Dorsolateral prefrontal cortex (tissue), 120 donors: ENCODE measurements at regions of chr11 and their contacts with region 1.

Region 1: DNA sequence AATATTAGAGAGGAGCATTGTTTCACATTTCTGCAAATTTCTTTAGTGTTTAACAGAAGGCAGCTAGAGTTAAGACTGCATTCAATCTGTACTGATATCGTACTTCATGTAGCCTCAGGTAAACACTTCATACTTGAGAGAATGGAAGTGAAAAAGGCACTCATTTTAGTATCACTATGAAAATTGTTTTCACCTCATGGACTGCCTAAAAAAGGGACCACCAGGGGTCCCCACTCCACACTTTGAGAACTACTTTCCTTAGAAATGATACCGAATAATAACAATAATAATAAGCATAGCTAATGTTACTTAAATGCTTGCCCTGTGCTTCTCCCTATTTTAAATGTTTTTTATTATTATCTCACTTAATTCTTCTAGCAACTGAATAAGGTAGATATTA is 95.1 kb downstream of the BLID start:
- DNase-seq: no peak
- H3K4me3 ChIP-seq: no peak overlapping the region
- H3K27ac ChIP-seq: no peak overlapping the region
- H3K27me3 ChIP-seq: no peaks in the 10 kb centered on the region
- CTCF ChIP-seq: peak in 55 of 56 donors; percentile 29 to 70 (median 54)

Region 2: GRCh38 chr11:121383716-121384115 is 637.2 kb before region 1 on chr11:
- intact Hi-C with region 1: no loop called
- DNase-seq: peak in 3 of 10 donors; percentile 32 to 64 (median 44)
- H3K4me3 ChIP-seq: no peak overlapping the region
- H3K27ac ChIP-seq: peak overlapping the region in 50 of 59 donors; percentile 9 to 85 (median 61)
- H3K27me3 ChIP-seq: no peaks in the 10 kb centered on the region
- CTCF ChIP-seq: no peak

Region 3: DNA sequence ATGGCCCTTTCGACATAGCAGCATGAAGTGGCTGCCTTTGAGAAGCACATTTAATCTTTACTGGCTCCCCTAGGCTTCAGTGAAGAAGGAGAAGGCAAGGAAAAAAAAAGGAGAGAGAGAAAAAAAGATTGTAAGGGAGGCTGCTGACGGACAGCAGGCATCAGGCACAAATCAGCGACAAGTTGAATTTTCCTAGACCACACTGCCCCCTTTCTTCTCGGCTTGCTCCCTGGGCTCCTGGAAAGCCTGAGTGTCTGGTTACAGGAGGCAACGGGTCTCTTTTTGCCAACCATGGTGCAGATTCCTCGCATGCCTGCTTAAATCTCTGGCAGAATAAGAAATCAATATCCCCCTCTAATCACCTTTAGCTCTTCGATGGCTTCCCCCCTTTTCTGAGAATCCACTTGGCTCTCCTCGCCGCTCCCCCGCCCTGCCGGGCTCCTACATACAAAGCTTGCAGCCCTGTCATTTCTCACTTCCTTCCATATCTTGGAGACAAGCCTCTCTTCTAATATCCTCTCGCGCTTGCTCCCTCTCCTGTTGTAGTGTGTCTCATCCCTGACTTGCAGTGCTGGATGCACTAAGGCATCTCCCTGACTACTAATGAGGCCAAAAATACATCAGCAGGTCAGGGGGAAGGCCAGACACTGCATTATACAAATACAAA is 80.9 kb after region 1 on chr11:
- intact Hi-C with region 1: loop called (anchors 5 kb)
- DNase-seq: peak; percentile 45 to 90 (median 81)
- H3K4me3 ChIP-seq: peak overlapping the region; percentile 58 to 91 (median 76)
- H3K27ac ChIP-seq: peak overlapping the region; percentile 91 to 99 (median 98)
- H3K27me3 ChIP-seq: no peaks in the 10 kb centered on the region
- CTCF ChIP-seq: peak; percentile 70 to 95 (median 85)

Region 4: GRCh38 chr11:122197055-122197987 is 176.4 kb after region 1 on chr11:
- intact Hi-C with region 1: loop called in 1 of 2 experiments (anchors 5 kb)
- DNase-seq: peak in 1 of 10 donors; percentile 48
- H3K4me3 ChIP-seq: no peak overlapping the region
- H3K27ac ChIP-seq: peak overlapping the region in 35 of 59 donors; percentile 6 to 80 (median 44)
- H3K27me3 ChIP-seq: no peaks in the 10 kb centered on the region
- CTCF ChIP-seq: no peak